ENCODE measurements at regions of chr17 and their contacts with region 1.

Region 1: DNA sequence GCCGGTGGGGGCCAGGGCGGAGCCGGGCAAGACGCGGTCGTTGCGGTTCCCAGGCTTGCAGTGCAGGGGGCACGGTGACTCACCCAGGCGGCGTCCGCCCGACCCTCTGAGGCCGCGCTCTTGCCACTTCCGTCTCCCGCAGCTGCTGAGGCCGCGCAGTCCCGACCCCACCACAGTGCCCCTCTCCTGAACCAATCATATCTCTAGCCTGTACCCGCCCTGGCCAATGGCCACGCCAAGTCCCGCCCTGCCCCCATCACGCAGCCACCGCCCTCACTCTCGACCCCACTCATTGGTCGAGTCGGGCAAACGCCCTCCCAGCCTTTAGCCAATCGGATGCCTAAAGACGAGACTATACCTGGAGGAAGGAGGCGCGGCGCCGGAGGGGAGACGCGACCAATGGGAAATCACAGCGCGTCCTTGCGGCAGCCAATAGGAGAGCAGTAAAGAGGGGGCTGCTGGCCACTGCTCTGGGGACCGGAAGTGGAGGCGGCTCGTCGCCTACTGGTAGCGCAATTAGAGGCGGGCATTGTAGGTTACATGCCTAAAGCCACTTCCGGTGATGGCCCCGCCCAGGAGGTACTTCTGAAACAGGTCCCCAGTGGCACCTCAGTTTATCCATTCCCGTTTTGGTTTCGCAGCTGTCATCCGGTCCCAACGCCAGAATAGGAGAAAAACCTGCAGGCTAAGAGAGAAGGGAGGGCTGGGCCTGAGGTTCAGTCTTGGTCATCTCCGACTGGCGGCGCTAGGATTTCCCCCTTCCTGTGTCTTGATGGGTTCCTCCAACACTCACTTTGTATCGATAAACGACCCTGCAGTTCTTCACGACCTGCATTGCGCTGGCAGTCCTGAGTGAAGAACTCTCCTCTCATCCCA is 3.5 kb upstream of the MTMR4 start:
- DNase-seq: peak; percentile 100
- H3K4me3 ChIP-seq: peak overlapping the region; percentile 82 to 98
- H3K4me3 Mint-ChIP-seq: peak overlapping the region; percentile 88 to 100 (median 96)
- H3K27ac ChIP-seq: peak overlapping the region; percentile 65
- H3K27ac Mint-ChIP-seq: peak overlapping the region; percentile 90 to 99 (median 97)
- H3K4me1 ChIP-seq: peaks cover 47% of the 10 kb centered on the region
- H3K4me1 Mint-ChIP-seq: peaks cover 27 to 55% (median 37%) of the 10 kb centered on the region in 4 donors
- H3K27me3 ChIP-seq: no peaks in the 10 kb centered on the region
- H3K27me3 Mint-ChIP-seq: peaks cover 0 to 2% of the 10 kb centered on the region in 2 donors

Region 2: DNA sequence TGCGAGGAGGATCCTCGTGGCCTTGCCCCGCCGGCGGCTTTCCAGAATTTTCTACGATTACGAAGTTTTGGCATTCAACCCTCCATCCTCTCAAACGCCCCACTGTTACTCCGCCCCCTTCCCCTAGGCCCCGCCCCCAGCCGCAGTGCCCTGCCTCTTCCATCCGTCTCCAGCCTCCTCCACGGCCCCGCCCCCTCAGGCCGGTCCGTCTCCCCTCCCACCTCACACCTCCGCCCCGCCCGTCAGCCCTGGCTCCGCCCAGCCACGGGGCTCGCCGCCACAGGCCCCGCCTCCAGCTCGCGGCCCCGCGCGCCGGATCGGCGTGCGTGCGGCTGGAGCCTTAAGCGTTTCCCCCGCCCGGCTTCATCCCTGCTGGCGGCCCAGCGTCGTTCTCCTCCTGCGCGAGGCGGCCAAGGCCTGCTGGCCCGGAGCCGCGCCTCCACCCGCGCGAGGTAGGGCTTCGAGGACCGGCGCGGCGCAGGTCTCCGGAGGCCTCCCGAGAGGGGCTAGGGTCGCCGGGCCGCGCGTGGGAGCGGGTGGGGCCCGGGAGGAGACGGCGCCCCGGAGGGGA is 1684.1 kb before region 1 on chr17 and contains the starts of genes C17orf67 and DGKE:
- CTCF ChIA-PET with region 1: no interaction called
- POLR2A ChIA-PET with region 1: interaction called, 3 read pairs
- intact Hi-C with region 1: loop called (anchors 5 kb)
- DNase-seq: peak; percentile 98 to 99 (median 98)
- H3K4me3 ChIP-seq: peak within 1 kb of the TSS; percentile 49 to 88
- H3K4me3 Mint-ChIP-seq: peak within 1 kb of the TSS; percentile 95 to 98 (median 96)
- H3K27ac ChIP-seq: peak within 1 kb of the TSS; percentile 79
- H3K27ac Mint-ChIP-seq: peak within 1 kb of the TSS; percentile 92 to 97 (median 95)
- H3K4me1 ChIP-seq: peaks cover 67% of the 10 kb centered on the region
- H3K4me1 Mint-ChIP-seq: peaks cover 43 to 75% (median 57%) of the 10 kb centered on the region in 4 donors
- H3K27me3 ChIP-seq: no peaks in the 10 kb centered on the region
- H3K27me3 Mint-ChIP-seq: no peaks in the 10 kb centered on the region
- total RNA-seq, gene C17orf67: 9.5 to 11.2 TPM
- total RNA-seq, gene DGKE: 36.7 to 37.7 TPM

Region 3: DNA sequence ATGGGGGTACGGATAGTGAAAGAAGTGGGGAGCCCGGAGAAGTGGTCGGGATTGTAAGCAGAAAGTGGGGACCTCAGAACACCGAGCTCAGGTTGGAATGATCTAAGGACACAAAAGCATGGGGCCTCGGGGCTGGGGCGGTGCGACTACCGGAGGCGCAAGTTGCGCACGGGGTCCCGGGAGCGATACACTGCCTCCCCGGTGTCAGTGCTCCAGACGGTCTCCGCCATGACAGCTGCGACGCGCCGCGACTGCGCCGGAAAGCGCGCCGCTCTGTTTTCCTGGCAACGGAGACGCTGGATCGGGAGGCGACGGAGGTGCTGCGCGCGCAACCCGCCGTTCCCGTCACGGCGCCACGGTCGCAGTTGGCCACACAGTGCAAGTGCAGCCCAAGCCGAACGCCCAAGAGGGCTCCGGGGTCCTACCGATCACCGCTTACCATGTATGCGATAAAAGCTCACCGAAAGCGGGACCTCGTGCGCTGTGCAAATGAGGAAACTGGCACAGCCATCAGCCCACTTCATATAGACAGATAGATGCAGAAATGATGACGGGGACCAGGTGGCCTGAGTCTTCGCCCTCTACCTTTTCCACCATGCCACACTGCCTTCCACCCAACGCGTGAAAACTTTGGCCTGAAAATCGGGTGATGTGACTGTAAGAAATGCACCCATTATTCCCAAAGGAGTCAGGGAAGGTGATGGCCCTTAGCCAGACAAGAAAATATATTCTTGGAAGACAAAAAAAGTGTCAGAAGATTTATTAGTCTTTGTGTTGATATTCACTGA is 298.8 kb before region 1 on chr17 and contains the start of gene MKS1:
- CTCF ChIA-PET with region 1: interaction called, 3 read pairs
- POLR2A ChIA-PET with region 1: interaction called, 4 read pairs
- intact Hi-C with region 1: loop called (anchors 1 kb)
- DNase-seq: peak; percentile 94 to 96 (median 95)
- H3K4me3 ChIP-seq: peak within 1 kb of the TSS; percentile 71 to 88
- H3K4me3 Mint-ChIP-seq: peak within 1 kb of the TSS; percentile 91 to 99 (median 94)
- H3K27ac ChIP-seq: peak within 1 kb of the TSS; percentile 54
- H3K27ac Mint-ChIP-seq: peak within 1 kb of the TSS; percentile 94 to 99 (median 97)
- H3K4me1 ChIP-seq: peaks cover 15% of the 10 kb centered on the region
- H3K4me1 Mint-ChIP-seq: peaks cover 19 to 28% (median 23%) of the 10 kb centered on the region in 4 donors
- H3K27me3 ChIP-seq: no peaks in the 10 kb centered on the region
- H3K27me3 Mint-ChIP-seq: peaks cover 0 to 2% of the 10 kb centered on the region in 2 donors
- total RNA-seq, gene MKS1: 27.7 to 29.4 TPM

Region 4: GRCh38 chr17:58352014-58352842 is 165.7 kb before region 1 on chr17 and contains the start of gene SUPT4H1:
- CTCF ChIA-PET with region 1: no interaction called
- POLR2A ChIA-PET with region 1: interaction called, 10 read pairs
- intact Hi-C with region 1: loop called (anchors 2 kb)
- DNase-seq: peak; percentile 91 to 94 (median 94)
- H3K4me3 ChIP-seq: peak within 1 kb of the TSS; percentile 92 to 98
- H3K4me3 Mint-ChIP-seq: peak within 1 kb of the TSS; percentile 99 to 100 (median 99)
- H3K27ac ChIP-seq: peak within 1 kb of the TSS; percentile 85
- H3K27ac Mint-ChIP-seq: peak within 1 kb of the TSS; percentile 98 to 100 (median 99)
- H3K4me1 ChIP-seq: peaks cover 57% of the 10 kb centered on the region
- H3K4me1 Mint-ChIP-seq: peaks cover 37 to 65% (median 52%) of the 10 kb centered on the region in 4 donors
- H3K27me3 ChIP-seq: no peaks in the 10 kb centered on the region
- H3K27me3 Mint-ChIP-seq: no peaks in the 10 kb centered on the region
- total RNA-seq, gene SUPT4H1: 61.4 to 75.2 TPM

Region 5: GRCh38 chr17:58587702-58588254 is 69.8 kb after region 1 on chr17:
- CTCF ChIA-PET with region 1: interaction called, 13 read pairs
- POLR2A ChIA-PET with region 1: interaction called, 8 read pairs
- intact Hi-C with region 1: loop called (anchors 1 kb)
- DNase-seq: peak; percentile 46 to 54 (median 48)
- H3K4me3 ChIP-seq: no peak overlapping the region
- H3K4me3 Mint-ChIP-seq: no peak overlapping the region
- H3K27ac ChIP-seq: no peak overlapping the region
- H3K27ac Mint-ChIP-seq: no peak overlapping the region
- H3K4me1 ChIP-seq: no peaks in the 10 kb centered on the region
- H3K4me1 Mint-ChIP-seq: peaks cover 0 to 4% (median 2%) of the 10 kb centered on the region in 4 donors
- H3K27me3 ChIP-seq: no peaks in the 10 kb centered on the region
- H3K27me3 Mint-ChIP-seq: peaks cover 0 to 2% of the 10 kb centered on the region in 2 donors

Region 6: DNA sequence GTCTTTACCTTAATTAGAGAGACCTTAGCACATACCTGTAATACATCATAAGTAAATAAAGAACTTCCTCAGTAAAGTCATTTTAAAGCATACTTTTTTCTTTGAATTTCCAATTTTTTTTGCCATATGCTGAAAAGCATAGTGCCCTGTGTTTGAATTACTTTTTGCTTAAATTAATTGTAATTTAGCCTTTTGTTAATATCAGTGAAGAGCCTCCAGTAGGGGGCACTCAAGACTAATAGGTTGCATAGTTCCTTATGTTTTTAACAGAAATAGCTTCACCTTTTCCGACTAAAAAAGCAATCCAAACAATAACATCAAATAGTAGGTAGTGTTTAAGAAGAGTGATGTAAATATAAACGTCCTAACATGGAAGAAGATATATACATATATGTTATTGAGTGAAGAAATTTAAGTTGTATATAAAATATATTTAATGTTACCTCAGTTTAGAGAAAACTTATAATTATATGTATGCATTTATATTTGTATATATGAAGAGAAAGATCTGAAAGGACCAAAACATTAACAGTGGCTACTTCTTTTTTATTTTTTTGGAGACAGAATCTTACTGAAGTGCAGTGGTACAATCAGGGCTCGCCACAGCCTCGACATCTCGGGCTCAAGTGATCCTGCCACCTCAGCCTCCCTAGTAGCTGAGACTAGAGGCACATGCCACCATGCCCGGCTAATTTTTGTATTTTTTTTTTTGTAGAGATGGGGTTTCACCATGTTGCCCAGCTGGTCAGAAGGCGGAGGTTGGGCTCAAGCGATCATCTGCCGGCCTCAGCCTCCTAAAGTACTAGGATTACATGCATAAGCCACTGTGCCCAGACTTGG is 193.2 kb after region 1 on chr17:
- CTCF ChIA-PET with region 1: interaction called, 4 read pairs
- POLR2A ChIA-PET with region 1: interaction called, 5 read pairs
- intact Hi-C with region 1: loop called (anchors 1 kb)
- DNase-seq: peak in 4 of 5 donors; percentile 22 to 38 (median 36)
- H3K4me3 ChIP-seq: no peak overlapping the region
- H3K4me3 Mint-ChIP-seq: no peak overlapping the region
- H3K27ac ChIP-seq: no peak overlapping the region
- H3K27ac Mint-ChIP-seq: no peak overlapping the region
- H3K4me1 ChIP-seq: no peaks in the 10 kb centered on the region
- H3K4me1 Mint-ChIP-seq: peaks cover 0 to 6% (median under 1%) of the 10 kb centered on the region in 4 donors
- H3K27me3 ChIP-seq: no peaks in the 10 kb centered on the region
- H3K27me3 Mint-ChIP-seq: no peaks in the 10 kb centered on the region

Region 7: GRCh38 chr17:59155439-59156182 is 637.6 kb after region 1 on chr17 and contains the start of gene PRR11:
- CTCF ChIA-PET with region 1: interaction called, 3 read pairs
- POLR2A ChIA-PET with region 1: interaction called, 10 read pairs
- intact Hi-C with region 1: loop called (anchors 1 kb)
- DNase-seq: peak in 3 of 5 donors; percentile 98 to 99 (median 99)
- H3K4me3 ChIP-seq: peak within 1 kb of the TSS; percentile 93 to 98
- H3K4me3 Mint-ChIP-seq: no peak within 1 kb of the TSS
- H3K27ac ChIP-seq: peak within 1 kb of the TSS; percentile 65
- H3K27ac Mint-ChIP-seq: no peak within 1 kb of the TSS
- H3K4me1 ChIP-seq: peaks cover 60% of the 10 kb centered on the region
- H3K4me1 Mint-ChIP-seq: peaks cover 25 to 53% (median 39%) of the 10 kb centered on the region in 4 donors
- H3K27me3 ChIP-seq: no peaks in the 10 kb centered on the region
- H3K27me3 Mint-ChIP-seq: no peaks in the 10 kb centered on the region
- total RNA-seq, gene PRR11: 0.93 to 2.1 TPM

Measured in CD4-positive, alpha-beta memory T cell (primary cell).